ENCODE measurements at regions of chrX and their contacts with region 1.

Region 1: DNA sequence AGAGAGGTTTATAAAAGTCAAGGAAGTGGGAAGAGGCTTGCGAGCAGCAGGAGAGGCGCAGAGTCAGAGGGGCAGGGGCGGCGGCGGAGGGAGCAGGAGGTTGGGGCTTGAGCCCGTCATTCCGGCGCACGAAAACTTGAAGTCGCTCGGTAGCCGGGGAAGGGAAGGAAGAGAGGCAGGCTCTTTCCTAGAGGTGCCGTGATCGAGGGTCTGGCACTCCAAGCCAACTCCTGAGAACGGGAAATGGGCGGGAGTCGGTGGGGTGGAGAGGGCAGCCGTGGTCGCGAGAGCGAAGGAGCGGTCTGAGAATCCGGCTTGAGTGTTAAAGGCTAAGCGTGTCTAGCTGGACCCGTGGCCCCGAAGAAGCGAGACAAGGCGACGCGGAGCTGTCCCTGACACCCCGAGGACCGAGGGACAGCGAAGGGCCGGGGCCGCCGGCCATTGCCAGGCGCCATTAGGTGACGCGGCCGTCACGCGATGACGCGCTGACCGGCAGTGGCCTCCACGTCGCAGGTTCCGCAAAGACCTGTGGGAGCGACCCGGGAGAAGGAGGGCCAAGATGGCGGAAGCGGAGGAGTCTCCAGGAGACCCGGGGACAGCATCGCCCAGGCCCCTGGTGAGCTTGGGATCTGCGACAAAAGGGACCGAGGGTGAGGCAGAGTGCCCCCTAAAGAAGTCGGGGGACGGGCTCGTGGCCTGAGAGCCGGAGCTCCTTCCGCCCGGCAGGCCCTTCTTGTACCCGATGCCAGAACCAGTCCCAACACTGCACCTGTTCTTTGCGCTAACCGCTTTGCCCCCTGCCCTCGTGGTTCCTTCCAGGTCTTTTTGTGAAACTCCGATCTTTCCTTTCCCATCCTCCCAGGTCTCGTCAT is at the start of gene YIPF6:
- DNase-seq: peak; percentile 71
- H3K4me3 ChIP-seq: peak within 1 kb of the TSS; percentile 67 to 95 (median 80)
- H3K27ac ChIP-seq: peak within 1 kb of the TSS; percentile 96
- H3K4me1 ChIP-seq: peaks cover 5% of the 10 kb centered on the region
- H3K27me3 ChIP-seq: no peaks in the 10 kb centered on the region
- CTCF ChIP-seq: no peak
- POLR2A ChIP-seq: peak; percentile 96
- total RNA-seq, gene YIPF6: 28.5 and 29.6 TPM in 2 replicates

Region 2: GRCh38 chrX:68433155-68433980 is 65.4 kb before region 1 on chrX and contains the start of gene OPHN1:
- CTCF ChIA-PET with region 1: no interaction called
- POLR2A ChIA-PET with region 1: no interaction called
- dilution Hi-C with region 1: no loop called
- intact Hi-C with region 1: loop called (anchors 5 kb)
- DNase-seq: peak; percentile 72
- H3K4me3 ChIP-seq: peak within 1 kb of the TSS; percentile 44 to 62 (median 59)
- H3K27ac ChIP-seq: peak within 1 kb of the TSS; percentile 64
- H3K4me1 ChIP-seq: peaks cover 9% of the 10 kb centered on the region
- H3K27me3 ChIP-seq: no peaks in the 10 kb centered on the region
- CTCF ChIP-seq: no peak
- POLR2A ChIP-seq: peak; percentile 37
- total RNA-seq, gene OPHN1: 6.2 and 6.7 TPM in 2 replicates

Region 3: DNA sequence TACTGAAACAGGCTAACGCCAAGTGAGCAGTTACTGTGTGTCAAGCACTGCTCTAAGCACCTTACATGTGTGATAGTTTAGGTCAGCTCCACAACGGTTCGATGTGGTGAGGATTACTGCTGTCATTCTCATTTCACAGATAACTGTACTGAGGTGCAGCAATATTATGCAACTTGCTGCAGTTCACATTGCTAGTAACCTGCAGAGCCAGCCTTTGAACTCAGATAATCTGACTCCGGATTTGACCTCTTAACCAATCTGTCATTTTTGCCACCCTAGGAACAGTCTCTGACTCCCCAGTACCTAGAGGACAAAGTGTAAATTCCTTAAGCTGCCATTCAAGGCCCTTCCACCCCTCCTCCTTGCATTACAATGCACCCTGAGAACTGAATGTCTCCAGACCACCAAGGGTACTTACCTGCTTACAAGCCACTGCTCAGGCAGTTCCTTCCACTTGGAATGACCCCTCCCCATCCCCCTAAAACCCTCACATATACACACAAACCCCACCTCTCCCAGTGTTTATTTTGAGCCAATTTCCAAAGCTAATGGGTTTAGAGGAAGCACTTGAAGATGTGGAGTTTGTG is 355.0 kb after region 1 on chrX:
- CTCF ChIA-PET with region 1: no interaction called
- POLR2A ChIA-PET with region 1: no interaction called
- dilution Hi-C with region 1: no loop called
- intact Hi-C with region 1: no loop called
- DNase-seq: no peak
- H3K4me3 ChIP-seq: no peak overlapping the region
- H3K27ac ChIP-seq: no peak overlapping the region
- H3K4me1 ChIP-seq: no peaks in the 10 kb centered on the region
- H3K27me3 ChIP-seq: no peaks in the 10 kb centered on the region
- CTCF ChIP-seq: no peak
- POLR2A ChIP-seq: no peak

Measured in endothelial cell of umbilical vein (primary cell).